CD4-positive, alpha-beta T cell (primary cell): ENCODE measurements at regions of chr4 and their contacts with region 1.

Region 1: GRCh38 chr4:23835774-23836478 is 53.9 kb downstream of the PPARGC1A start:
- DNase-seq: no peak
- ATAC-seq: no peak
- H3K4me3 ChIP-seq: no peak overlapping the region
- H3K4me3 Mint-ChIP-seq: no peak overlapping the region
- H3K27ac ChIP-seq: no peak overlapping the region
- H3K27ac Mint-ChIP-seq: no peak overlapping the region
- H3K4me1 ChIP-seq: no peaks in the 10 kb centered on the region
- H3K4me1 Mint-ChIP-seq: no peaks in the 10 kb centered on the region
- H3K27me3 ChIP-seq: no peaks in the 10 kb centered on the region
- H3K27me3 Mint-ChIP-seq: no peaks in the 10 kb centered on the region
- CTCF ChIP-seq: no peak

Region 2: DNA sequence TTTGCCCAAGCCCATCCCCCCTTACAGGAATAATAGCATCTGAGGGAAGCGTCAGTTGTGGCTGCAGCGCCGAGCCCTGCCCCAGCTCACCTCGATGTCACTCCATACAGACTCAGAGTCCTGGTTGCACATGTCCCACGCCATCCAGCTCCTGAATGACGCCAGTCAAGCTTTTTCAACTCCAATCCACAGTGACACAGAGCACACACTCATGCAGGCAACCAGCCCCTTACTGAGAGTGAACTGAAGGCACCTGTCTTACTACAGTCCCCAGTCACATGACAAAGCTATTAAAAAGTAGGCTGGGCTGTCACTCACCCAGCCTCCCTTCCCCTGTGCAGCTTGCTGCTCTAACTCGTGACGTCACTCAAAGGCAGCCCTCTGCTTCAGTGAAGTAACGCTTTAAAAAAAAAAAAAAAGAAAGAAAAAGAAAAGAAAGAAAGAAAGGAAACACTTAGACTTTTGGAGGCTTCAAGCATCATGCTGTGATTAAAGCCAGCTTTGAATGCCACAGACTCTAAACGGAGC is 54.0 kb after region 1 on chr4 and contains the start of gene PPARGC1A:
- CTCF ChIA-PET with region 1: no interaction called
- POLR2A ChIA-PET with region 1: no interaction called
- intact Hi-C with region 1: loop called in 1 of 2 experiments (anchors 5 kb)
- DNase-seq: peak in 2 of 14 experiments; percentile 20 to 36
- ATAC-seq: peak; percentile 54
- H3K4me3 ChIP-seq: peak within 1 kb of the TSS; percentile 3
- H3K4me3 Mint-ChIP-seq: peak within 1 kb of the TSS; percentile 54
- H3K27ac ChIP-seq: no peak within 1 kb of the TSS
- H3K27ac Mint-ChIP-seq: no peak within 1 kb of the TSS
- H3K4me1 ChIP-seq: peaks cover 5% of the 10 kb centered on the region
- H3K4me1 Mint-ChIP-seq: peaks cover 27% of the 10 kb centered on the region
- H3K27me3 ChIP-seq: no peaks in the 10 kb centered on the region
- H3K27me3 Mint-ChIP-seq: peaks cover 29% of the 10 kb centered on the region
- CTCF ChIP-seq: no peak
- total RNA-seq, gene PPARGC1A: not detected